Sciatic nerve (tissue), 2 donors: ENCODE measurements at regions of chr12 and their contacts with region 1.

Region 1: DNA sequence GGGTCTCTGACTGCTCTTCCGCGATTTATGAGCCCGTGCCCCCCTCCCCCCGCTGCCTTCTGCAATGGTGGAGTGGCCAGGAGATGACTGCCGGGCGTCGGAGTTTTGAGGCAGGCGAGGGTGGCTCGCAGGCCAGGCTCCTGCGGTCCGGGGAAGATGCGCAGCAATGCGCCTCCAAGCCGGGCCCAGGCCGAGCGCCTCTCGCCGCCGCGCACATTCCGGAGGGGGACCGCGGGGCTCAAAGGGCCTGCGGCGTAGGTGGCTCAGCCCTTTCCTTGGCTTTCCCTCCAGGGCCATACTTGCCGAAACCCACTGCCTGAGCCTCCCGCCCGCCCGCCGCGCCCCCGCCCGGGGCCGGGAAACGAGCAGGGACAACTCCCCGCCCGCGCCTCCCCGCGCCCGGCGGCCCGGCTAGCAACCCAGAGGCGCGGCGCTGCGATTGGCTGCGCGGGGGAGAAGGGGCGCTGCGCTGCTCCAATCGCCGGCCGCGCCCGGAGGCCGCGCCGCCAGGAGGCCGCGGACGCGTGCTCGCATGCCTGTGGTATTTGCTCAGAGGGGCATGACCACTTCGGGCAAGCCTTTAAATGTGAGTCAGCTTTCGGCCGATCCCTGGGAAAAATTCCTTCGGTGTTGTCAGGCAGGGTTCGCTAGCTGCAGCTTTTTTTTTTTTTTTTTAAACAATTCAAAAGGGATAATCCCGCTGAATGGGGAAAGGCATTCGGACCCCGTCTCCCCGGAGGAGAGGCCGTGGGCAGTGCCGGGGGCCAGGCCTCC is 157.9 kb upstream of the PARP11 start:
- DNase-seq: peak; percentile 93
- ATAC-seq: peak; percentile 99

Region 2: DNA sequence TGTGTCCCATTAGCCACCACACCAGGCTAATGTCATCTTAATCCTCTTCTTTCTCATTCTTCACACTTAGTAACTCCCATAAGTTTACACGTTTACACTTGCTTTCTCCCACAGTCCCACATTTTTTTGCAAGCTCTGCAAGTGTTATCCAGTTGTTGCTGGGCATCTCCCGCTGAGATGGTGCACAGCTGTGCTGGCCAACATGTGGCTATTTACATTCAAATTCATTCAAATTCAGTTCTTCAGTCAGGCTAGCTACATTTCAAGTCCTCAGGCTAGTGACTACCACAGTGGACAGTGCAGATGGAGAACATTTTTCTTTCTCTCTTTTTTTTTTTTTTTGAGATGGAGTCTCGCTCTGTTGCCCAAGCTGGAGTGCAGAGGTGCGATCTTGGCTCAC is 1081.7 kb before region 1 on chr12:
- intact Hi-C with region 1: no loop called
- DNase-seq: no peak
- ATAC-seq: no peak

Region 3: DNA sequence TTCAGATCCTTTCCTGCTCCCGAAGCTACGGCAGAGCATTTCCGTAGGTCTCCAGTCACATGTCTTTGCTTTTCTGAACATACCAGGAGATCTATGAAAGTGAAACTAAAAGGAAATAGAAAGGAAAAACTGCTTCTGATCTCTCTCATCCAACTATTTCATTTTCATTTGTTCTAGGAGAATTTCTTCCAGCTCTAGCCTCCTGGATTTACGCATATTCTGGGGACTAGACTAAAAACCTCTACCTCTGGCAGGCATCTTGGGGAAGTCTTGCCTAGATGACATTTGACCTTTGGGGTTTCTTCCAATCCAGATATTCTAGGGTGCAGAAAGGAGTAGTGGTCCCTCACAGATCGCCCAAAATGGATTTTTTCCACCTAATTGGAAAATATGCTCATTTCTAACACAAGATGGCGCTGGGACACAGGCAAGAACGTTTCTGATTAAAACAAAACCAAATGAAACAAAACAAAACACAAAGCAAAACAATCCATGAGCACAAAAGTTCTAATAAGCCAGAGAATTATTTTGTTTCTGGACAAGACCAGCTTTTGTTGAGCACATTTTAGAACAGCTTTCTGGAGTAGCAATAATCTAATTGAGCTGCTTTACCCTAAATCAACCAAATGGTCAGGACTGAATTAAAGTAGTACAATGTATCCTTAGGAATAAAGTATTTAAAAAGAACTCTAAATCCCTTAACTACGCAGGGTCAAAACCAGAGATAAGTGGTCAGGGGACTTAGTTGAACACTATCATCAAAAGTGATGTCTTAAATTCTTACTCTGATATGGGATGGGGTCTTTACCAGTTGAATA is 145.6 kb before region 1 on chr12:
- intact Hi-C with region 1: loop called (anchors 5 kb)
- DNase-seq: no peak
- ATAC-seq: peak; percentile 84